ENCODE measurements at regions of chr6 and their contacts with region 1.

Region 1: GRCh38 chr6:31834434-31835198 is 7.1 kb downstream of the HSPA1B start:
- DNase-seq: peak; percentile 93

Region 2: DNA sequence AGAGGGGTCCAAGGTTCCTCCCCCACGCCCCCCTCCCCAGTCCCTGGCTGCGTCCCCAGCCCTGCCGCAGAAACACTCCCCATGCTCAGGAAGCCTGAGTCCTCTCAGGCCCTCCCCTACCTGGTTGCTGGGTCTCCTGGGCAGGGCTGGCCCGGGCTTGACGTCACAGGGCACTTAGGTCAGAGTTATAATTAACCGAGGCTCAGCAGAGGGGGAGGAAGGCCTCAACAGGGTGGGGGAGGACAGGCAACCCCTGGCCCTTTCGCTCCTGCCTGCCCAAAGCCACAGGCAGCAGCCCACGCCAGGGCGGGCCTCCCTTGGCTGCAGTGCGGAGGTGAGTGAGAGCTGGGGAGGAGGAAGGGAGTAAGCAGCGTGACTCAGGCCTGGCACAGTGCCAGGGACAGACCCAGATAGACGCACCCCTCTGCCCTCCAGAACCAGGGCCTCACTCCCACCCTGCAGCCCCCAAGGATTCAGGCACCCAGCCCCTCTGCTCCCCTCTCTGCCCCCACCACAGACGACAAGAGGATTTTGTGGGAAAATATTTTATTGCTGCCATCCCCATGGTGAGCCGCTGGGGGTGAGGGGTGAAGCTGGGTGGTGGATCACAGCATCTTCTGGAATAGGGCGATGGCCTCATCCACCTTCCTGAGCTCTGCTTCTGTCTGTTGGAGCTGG is 57.5 kb before region 1 on chr6 and contains the start of gene VWA7:
- intact Hi-C with region 1: loop called (anchors 2 kb)
- DNase-seq: peak; percentile 86
- total RNA-seq, gene VWA7: 21.5 TPM

Region 3: GRCh38 chr6:31795616-31796298 is 38.9 kb before region 1 on chr6 and contains the start of gene VARS1:
- intact Hi-C with region 1: no loop called
- DNase-seq: peak; percentile 98
- total RNA-seq, gene VARS1: 35.0 TPM

Region 4: GRCh38 chr6:31851485-31851832 is 16.8 kb after region 1 on chr6:
- intact Hi-C with region 1: no loop called
- DNase-seq: no peak

Measured in cardiac septum (tissue), 1 donor.